B cell (primary cell): ENCODE measurements at regions of chr1 and their contacts with region 1.

Region 1: GRCh38 chr1:183841950-183842794 is 37.3 kb downstream of the RGL1 start:
- DNase-seq: peak; percentile 17
- ATAC-seq: peak; percentile 58
- H3K4me3 ChIP-seq: peak overlapping the region in 1 of 5 experiments; percentile 42
- H3K4me3 Mint-ChIP-seq: peak overlapping the region; percentile 53
- H3K27ac ChIP-seq: no peak overlapping the region
- H3K27ac Mint-ChIP-seq: no peak overlapping the region
- H3K4me1 ChIP-seq: peaks cover 0 to 13% of the 10 kb centered on the region in 2 donors
- H3K4me1 Mint-ChIP-seq: peaks cover 12% of the 10 kb centered on the region
- H3K27me3 ChIP-seq: no peaks in the 10 kb centered on the region
- H3K27me3 Mint-ChIP-seq: no peaks in the 10 kb centered on the region
- CTCF ChIP-seq: no peak

Region 2: DNA sequence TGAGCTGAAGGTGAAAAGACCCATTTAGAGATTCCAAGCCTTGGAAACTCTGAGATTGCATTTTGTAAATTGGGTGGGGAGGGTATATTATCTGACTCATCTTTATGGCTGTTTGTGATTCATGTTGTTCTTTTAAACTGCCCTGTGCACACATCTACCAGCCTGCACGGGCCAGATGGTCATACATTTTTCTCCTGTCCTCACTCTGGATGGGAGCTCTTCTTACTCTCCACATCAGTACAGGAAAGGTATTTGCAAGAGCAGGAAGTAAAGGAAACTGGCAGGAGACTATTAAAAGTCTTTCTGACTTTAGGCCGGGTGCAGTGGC is 409.7 kb before region 1 on chr1:
- CTCF ChIA-PET with region 1: no interaction called
- POLR2A ChIA-PET with region 1: no interaction called
- intact Hi-C with region 1: no loop called
- DNase-seq: no peak
- ATAC-seq: no peak
- H3K4me3 ChIP-seq: no peak overlapping the region
- H3K4me3 Mint-ChIP-seq: no peak overlapping the region
- H3K27ac ChIP-seq: no peak overlapping the region
- H3K27ac Mint-ChIP-seq: no peak overlapping the region
- H3K4me1 ChIP-seq: no peaks in the 10 kb centered on the region
- H3K4me1 Mint-ChIP-seq: no peaks in the 10 kb centered on the region
- H3K27me3 ChIP-seq: peaks cover 0 to 21% (median 5%) of the 10 kb centered on the region in 4 experiments
- H3K27me3 Mint-ChIP-seq: peaks cover 46% of the 10 kb centered on the region
- CTCF ChIP-seq: no peak

Region 3: DNA sequence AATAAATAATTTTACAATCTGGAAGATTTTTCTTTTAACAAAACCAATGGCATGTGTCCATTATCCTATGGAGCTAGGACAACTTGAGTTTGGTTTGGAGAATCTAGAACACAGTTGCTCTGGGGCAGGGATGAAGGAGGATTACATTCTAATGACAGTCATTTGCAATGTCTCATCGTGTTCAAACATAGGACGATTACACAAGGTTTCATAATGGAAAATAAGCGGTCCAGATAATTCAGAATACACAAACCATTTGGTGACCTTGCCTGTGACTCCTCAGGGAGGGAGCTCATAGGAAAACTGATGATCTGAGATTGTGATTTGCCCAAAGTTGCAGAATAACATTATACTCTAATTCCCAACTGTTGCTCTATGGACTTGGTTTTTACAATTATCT is 64.8 kb before region 1 on chr1:
- CTCF ChIA-PET with region 1: no interaction called
- POLR2A ChIA-PET with region 1: interaction called, 15 read pairs
- intact Hi-C with region 1: no loop called
- DNase-seq: no peak
- ATAC-seq: no peak
- H3K4me3 ChIP-seq: no peak overlapping the region
- H3K4me3 Mint-ChIP-seq: no peak overlapping the region
- H3K27ac ChIP-seq: no peak overlapping the region
- H3K27ac Mint-ChIP-seq: no peak overlapping the region
- H3K4me1 ChIP-seq: no peaks in the 10 kb centered on the region
- H3K4me1 Mint-ChIP-seq: no peaks in the 10 kb centered on the region
- H3K27me3 ChIP-seq: no peaks in the 10 kb centered on the region
- H3K27me3 Mint-ChIP-seq: no peaks in the 10 kb centered on the region
- CTCF ChIP-seq: no peak

Region 4: DNA sequence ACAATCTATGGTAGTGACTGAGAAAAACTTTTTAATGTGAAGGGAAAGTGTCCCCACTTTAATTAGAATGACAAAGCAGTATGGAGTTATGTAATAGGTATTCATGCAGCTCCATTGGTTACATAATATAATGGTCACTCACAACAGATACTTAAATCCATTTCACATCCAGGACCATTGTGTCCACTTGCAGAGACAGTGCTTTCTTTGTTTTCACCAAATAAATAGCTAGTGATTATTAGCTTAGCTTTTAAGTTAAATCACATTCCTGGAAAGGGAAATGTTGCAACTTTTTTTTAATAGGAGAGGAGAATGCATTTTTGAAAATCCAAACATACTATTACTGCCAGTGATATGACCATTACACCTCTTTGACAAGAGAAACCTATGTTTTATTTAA is 14.4 kb before region 1 on chr1:
- CTCF ChIA-PET with region 1: no interaction called
- POLR2A ChIA-PET with region 1: no interaction called
- intact Hi-C with region 1: no loop called
- DNase-seq: no peak
- ATAC-seq: no peak
- H3K4me3 ChIP-seq: no peak overlapping the region
- H3K4me3 Mint-ChIP-seq: no peak overlapping the region
- H3K27ac ChIP-seq: no peak overlapping the region
- H3K27ac Mint-ChIP-seq: no peak overlapping the region
- H3K4me1 ChIP-seq: no peaks in the 10 kb centered on the region
- H3K4me1 Mint-ChIP-seq: no peaks in the 10 kb centered on the region
- H3K27me3 ChIP-seq: no peaks in the 10 kb centered on the region
- H3K27me3 Mint-ChIP-seq: peaks cover 10% of the 10 kb centered on the region
- CTCF ChIP-seq: no peak